Activated B cell treated with CpG ODN at 0.5 μM for 24 hours (primary cell): ENCODE measurements at regions of chr6 and their contacts with region 1.

Region 1: GRCh38 chr6:134640975-134641429 is 308.9 kb downstream of the ALDH8A1 start:
- DNase-seq: peak; percentile 52
- ATAC-seq: peak; percentile 96
- H3K4me3 Mint-ChIP-seq: no peak overlapping the region
- H3K27ac Mint-ChIP-seq: no peak overlapping the region
- H3K4me1 Mint-ChIP-seq: peaks cover 12% of the 10 kb centered on the region
- H3K27me3 Mint-ChIP-seq: no peaks in the 10 kb centered on the region
- CTCF ChIP-seq: peak; percentile 22

Region 2: GRCh38 chr6:133952815-133953633 is 688.0 kb before region 1 on chr6 and contains the start of gene TBPL1:
- CTCF ChIA-PET with region 1: no interaction called
- POLR2A ChIA-PET with region 1: no interaction called
- intact Hi-C with region 1: loop called (anchors 10 kb)
- DNase-seq: peak; percentile 83
- ATAC-seq: peak; percentile 84
- H3K4me3 Mint-ChIP-seq: peak within 1 kb of the TSS; percentile 95
- H3K27ac Mint-ChIP-seq: peak within 1 kb of the TSS; percentile 98
- H3K4me1 Mint-ChIP-seq: peaks cover 53% of the 10 kb centered on the region
- H3K27me3 Mint-ChIP-seq: no peaks in the 10 kb centered on the region
- CTCF ChIP-seq: no peak
- total RNA-seq, gene TBPL1: 33.0 and 35.7 TPM in 2 replicates

Region 3: DNA sequence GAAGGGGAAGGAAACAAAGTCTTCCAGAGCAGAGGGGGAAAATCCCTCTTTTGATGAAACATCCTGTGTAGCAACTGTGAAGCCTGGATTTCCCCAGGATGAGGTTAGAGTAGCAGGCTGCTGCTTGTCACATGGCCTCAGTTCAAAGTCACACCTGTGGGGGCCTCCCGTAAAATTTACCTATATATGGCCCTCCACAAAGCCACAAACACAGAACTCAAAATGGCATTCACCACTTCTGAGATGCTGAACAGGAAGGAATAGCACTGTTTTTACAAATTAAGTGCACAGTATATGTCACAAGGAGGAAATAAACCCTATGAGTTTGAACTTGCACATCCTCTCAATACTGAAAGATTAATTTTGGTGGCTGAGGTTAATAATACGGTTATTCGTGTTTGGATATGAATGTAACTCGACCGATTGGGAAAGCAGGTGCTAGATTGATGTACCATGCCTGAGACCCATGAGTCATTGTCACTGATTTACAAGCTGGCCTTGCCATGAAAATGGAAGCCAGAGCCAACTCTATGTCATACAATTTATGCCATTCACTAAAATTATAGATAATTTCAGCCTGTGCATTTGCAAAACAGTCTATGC is 393.7 kb before region 1 on chr6:
- CTCF ChIA-PET with region 1: interaction called, 3 read pairs
- POLR2A ChIA-PET with region 1: no interaction called
- intact Hi-C with region 1: loop called (anchors 1 kb)
- DNase-seq: peak; percentile 44
- ATAC-seq: peak; percentile 82
- H3K4me3 Mint-ChIP-seq: peak overlapping the region; percentile 47
- H3K27ac Mint-ChIP-seq: peak overlapping the region; percentile 97
- H3K4me1 Mint-ChIP-seq: peaks cover 59% of the 10 kb centered on the region
- H3K27me3 Mint-ChIP-seq: no peaks in the 10 kb centered on the region
- CTCF ChIP-seq: no peak

Region 4: DNA sequence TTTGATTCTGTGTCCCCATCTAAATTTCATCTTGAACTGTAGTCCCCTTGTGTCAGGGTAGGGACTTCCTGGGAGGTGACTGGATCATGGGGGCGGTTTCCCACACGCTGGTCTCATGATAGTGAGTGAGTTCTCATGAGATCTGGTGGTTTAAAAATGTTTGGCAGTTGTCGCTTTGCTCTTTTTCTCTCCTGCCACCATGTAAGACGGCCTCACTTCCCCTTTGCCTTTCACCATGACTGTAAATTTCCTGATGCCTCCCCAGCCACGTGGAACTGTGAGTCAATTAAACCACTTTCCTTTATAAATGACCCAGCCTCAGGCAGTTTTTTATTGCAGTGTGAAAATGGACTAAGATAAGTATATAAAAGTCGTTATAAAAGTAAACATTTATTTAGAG is 242.5 kb before region 1 on chr6:
- CTCF ChIA-PET with region 1: interaction called, 3 read pairs
- POLR2A ChIA-PET with region 1: no interaction called
- intact Hi-C with region 1: loop called (anchors 1 kb)
- DNase-seq: no peak
- ATAC-seq: peak; percentile 89
- H3K4me3 Mint-ChIP-seq: no peak overlapping the region
- H3K27ac Mint-ChIP-seq: peak overlapping the region; percentile 83
- H3K4me1 Mint-ChIP-seq: peaks cover 20% of the 10 kb centered on the region
- H3K27me3 Mint-ChIP-seq: no peaks in the 10 kb centered on the region
- CTCF ChIP-seq: no peak

Region 5: GRCh38 chr6:134630508-134631121 is 10.4 kb before region 1 on chr6:
- CTCF ChIA-PET with region 1: interaction called, 8 read pairs
- POLR2A ChIA-PET with region 1: no interaction called
- intact Hi-C with region 1: loop called (anchors 1 kb)
- DNase-seq: no peak
- ATAC-seq: peak; percentile 97
- H3K4me3 Mint-ChIP-seq: peak overlapping the region; percentile 4
- H3K27ac Mint-ChIP-seq: no peak overlapping the region
- H3K4me1 Mint-ChIP-seq: peaks cover 27% of the 10 kb centered on the region
- H3K27me3 Mint-ChIP-seq: peaks cover 2% of the 10 kb centered on the region
- CTCF ChIP-seq: no peak

Region 6: DNA sequence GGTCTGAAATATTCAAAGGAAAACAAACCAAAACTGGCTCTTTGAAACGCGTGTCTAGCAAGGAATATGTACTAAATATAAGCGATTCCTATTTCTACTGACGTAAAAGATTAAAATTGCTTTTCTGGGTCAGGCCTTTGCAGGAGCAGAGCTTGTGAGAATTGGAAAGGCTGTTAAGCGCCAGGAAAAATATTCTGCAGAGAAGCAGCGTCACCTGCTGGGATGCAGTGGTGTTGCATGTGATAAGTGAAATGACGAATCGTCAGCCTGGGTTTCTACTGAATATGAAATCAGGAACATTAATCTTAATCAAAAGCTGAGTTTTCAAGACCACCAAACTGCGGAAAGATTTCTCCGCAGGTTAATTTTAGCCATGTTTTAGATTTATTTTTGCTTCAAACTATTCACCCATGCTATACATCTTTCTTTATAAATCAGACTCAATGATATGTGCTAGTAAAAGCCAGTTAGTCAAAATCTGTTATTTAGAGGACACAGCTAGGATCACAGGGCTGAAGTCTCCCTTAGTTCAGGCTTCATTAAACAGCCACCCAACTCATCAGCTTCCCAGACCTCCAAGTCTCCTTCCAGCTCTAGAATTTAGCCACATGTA is 241.5 kb after region 1 on chr6:
- CTCF ChIA-PET with region 1: interaction called, 3 read pairs
- POLR2A ChIA-PET with region 1: no interaction called
- intact Hi-C with region 1: loop called (anchors 1 kb)
- DNase-seq: peak; percentile 35
- ATAC-seq: peak; percentile 57
- H3K4me3 Mint-ChIP-seq: no peak overlapping the region
- H3K27ac Mint-ChIP-seq: no peak overlapping the region
- H3K4me1 Mint-ChIP-seq: no peaks in the 10 kb centered on the region
- H3K27me3 Mint-ChIP-seq: peaks cover 11% of the 10 kb centered on the region
- CTCF ChIP-seq: peak; percentile 84

Region 7: DNA sequence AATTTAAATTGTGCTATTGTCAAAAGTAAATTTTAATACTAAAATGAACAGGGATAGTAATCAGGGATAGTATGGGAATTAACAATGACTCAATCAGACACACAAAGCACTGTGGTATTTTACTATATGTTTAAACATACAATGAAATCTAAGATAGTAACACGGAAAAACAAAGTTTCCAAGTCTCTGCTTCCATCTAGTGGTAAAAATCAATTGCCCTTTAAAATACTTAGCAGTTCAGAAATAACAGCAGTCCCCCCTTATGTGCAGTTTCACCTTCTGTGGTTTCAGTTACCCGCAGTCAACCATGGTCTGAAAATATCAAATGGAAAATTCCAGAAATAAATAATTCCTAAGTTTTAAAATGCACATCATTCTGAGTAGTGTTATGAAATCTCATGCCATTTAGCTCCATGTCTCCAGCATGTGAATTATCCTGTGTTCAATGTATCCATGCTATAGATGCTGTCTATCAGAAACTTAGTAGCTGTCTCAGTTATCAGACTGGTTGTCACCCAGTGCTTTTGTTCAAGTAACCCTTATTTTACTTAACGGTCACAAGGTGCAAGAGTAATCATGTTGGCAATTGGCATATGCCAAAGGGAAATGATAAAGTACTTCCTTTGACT is 798.0 kb after region 1 on chr6:
- CTCF ChIA-PET with region 1: no interaction called
- POLR2A ChIA-PET with region 1: no interaction called
- intact Hi-C with region 1: loop called (anchors 10 kb)
- DNase-seq: no peak
- ATAC-seq: peak; percentile 25
- H3K4me3 Mint-ChIP-seq: no peak overlapping the region
- H3K27ac Mint-ChIP-seq: no peak overlapping the region
- H3K4me1 Mint-ChIP-seq: peaks cover 22% of the 10 kb centered on the region
- H3K27me3 Mint-ChIP-seq: no peaks in the 10 kb centered on the region
- CTCF ChIP-seq: no peak